ENCODE measurements at regions of chr16 and their contacts with region 1.

Region 1: GRCh38 chr16:401468-402348 is at the start of gene DECR2:
- DNase-seq: peak; percentile 67 to 96
- H3K4me3 ChIP-seq: peak within 1 kb of the TSS; percentile 99
- H3K27ac ChIP-seq: peak within 1 kb of the TSS; percentile 67
- H3K4me1 ChIP-seq: peaks cover 13% of the 10 kb centered on the region
- H3K27me3 ChIP-seq: no peaks in the 10 kb centered on the region
- CTCF ChIP-seq: no peak; the same call in 1 of the 2 replicates
- total RNA-seq, gene DECR2: 65.4 and 78.4 TPM in 2 replicates

Region 2: DNA sequence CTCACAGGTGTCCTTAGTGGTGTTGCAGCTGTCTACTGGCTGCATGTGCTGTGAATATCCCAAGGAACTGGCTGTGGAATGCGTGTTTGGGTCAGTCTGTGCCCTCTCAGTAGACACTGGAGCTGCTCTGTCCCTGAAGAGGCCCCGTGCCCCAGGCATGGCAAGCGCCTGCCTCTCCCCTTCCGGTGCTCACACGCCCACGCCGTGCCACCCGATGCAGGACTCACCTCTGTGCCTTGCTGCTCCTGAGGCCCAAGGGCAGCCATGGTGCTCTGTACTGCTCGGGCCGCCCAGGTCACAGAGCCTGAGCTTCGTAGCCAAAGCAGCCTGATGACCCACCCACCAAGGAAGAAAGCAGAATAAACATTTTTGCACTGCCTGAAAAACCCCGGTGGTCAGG is 136.0 kb before region 1 on chr16:
- CTCF ChIA-PET with region 1: no interaction called
- POLR2A ChIA-PET with region 1: no interaction called
- intact Hi-C with region 1: no loop called
- DNase-seq: no peak
- H3K4me3 ChIP-seq: no peak overlapping the region
- H3K27ac ChIP-seq: no peak overlapping the region
- H3K4me1 ChIP-seq: no peaks in the 10 kb centered on the region
- H3K27me3 ChIP-seq: no peaks in the 10 kb centered on the region; the same call in 1 of the 2 replicates
- CTCF ChIP-seq: no peak

Region 3: DNA sequence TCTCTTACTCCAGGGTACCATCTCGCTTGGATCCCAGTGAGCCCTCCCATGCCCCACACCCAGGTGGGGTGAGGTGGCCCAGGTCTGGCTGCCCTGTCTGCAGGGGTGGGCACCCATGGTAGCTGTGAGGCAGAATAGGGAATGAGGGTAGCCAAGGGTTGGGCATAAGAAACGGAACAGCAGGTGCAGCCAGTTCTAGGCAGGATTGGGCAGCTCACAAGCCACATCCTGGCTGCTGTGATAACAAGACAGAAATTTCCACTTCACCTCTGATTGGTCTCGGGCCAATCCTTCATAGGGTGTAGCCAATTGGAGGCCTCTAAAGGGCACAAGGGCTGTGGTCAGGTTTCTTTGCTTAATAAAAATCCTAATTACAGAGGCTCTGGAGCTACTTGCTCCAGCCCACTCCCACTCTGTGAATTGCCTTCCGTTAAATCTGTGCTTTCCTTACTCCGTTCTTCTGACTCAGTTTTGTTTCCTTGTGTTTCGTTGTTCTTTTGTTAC is 122.8 kb before region 1 on chr16:
- CTCF ChIA-PET with region 1: no interaction called
- POLR2A ChIA-PET with region 1: no interaction called
- intact Hi-C with region 1: no loop called
- DNase-seq: peak; percentile 39 to 58
- H3K4me3 ChIP-seq: no peak overlapping the region
- H3K27ac ChIP-seq: no peak overlapping the region
- H3K4me1 ChIP-seq: no peaks in the 10 kb centered on the region
- H3K27me3 ChIP-seq: peaks cover 12% of the 10 kb centered on the region; the same call in 1 of the 2 replicates
- CTCF ChIP-seq: no peak

Region 4: DNA sequence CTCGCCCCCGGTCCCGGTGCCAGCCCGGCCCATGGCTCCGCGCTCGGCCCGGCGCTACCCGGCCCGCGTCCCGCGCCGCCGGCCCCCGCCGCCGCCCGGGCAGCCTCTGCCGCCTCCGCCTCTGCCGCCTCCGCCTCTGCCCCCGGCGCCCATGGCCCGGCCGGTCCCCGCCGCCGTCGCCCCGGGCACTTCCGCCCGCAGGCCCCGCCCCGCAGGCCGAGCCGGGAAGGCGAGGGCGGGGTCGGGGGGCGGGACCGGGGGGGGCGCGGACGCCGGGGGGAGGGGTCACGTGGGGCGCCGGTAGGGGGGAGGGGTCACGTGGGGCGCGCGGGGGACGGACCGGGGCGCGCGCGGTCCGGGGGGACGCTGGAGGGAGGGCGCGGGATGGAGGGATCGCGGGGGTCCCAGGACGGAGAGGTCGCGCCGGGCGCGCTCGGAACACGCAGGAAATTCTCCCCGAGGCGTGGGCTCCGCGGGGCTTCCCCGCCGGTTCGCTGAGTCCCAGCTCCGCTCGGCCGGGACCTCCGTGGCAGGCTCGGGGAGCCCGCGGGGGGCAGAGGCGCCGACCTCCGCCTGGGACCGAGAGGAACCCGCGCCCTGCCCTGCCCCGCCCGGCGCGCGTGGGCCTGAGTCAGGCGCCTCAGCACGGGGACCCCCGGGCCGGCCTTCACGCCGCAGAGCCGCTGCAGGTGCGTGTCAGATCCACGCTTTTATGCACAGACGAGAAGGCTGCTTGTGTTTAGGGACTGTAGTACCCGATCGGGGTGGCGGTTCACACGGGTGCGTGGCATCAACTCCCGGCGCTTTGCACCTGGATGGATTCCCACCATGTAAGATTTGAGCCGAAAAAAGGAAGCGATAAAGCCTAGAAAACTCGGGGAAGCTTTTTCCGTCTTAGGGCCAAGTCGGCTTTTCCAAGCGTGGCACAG is 19.7 kb before region 1 on chr16 and contains the start of gene PGAP6:
- CTCF ChIA-PET with region 1: no interaction called
- POLR2A ChIA-PET with region 1: interaction called, 20 read pairs
- intact Hi-C with region 1: no loop called
- DNase-seq: peak in 1 of 2 experiments; percentile 81
- H3K4me3 ChIP-seq: peak within 1 kb of the TSS; percentile 67
- H3K27ac ChIP-seq: no peak within 1 kb of the TSS
- H3K4me1 ChIP-seq: no peaks in the 10 kb centered on the region
- H3K27me3 ChIP-seq: no peaks in the 10 kb centered on the region
- CTCF ChIP-seq: no peak
- total RNA-seq, gene PGAP6: 41.4 and 45.6 TPM in 2 replicates

Region 5: DNA sequence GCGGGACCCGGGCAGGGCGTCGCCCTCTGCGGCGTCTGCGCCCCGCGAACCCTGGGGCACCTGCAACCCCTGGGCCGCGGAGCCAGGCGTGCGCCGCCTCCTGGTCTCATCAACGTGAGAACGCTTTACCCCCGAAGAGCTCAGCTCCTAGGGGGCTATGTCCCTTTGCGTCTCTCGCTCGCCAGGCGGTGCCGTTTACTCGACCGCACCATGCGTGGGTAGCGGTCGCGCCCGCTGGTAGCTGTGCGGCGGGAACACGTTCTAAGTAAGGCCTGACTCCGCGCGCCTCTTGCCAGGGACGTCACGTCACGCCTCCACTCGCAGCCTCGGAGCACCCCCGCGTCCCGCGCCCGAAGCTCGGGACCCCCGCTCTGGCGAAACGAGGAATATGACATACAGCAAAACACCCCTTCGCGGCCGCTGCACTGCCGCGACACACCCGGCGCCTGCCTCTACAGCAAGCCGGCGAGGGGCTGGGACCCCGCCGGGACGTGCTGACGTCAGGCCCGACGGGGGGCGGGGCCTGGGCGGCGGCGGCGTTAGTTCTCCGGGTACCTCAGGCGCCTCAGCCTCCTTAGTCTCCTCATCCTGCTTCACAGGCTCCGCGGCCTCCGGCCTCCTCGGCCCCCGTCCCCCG is 23.5 kb after region 1 on chr16 and contains the start of gene RAB11FIP3:
- CTCF ChIA-PET with region 1: no interaction called
- POLR2A ChIA-PET with region 1: interaction called, 13 read pairs
- intact Hi-C with region 1: loop called (anchors 1 kb)
- DNase-seq: peak; percentile 57 to 81
- H3K4me3 ChIP-seq: peak within 1 kb of the TSS; percentile 68
- H3K27ac ChIP-seq: no peak within 1 kb of the TSS
- H3K4me1 ChIP-seq: peaks cover 22% of the 10 kb centered on the region
- H3K27me3 ChIP-seq: no peaks in the 10 kb centered on the region
- CTCF ChIP-seq: no peak; the same call in 1 of the 2 replicates
- total RNA-seq, gene RAB11FIP3: 38.4 and 42.4 TPM in 2 replicates

Region 6: DNA sequence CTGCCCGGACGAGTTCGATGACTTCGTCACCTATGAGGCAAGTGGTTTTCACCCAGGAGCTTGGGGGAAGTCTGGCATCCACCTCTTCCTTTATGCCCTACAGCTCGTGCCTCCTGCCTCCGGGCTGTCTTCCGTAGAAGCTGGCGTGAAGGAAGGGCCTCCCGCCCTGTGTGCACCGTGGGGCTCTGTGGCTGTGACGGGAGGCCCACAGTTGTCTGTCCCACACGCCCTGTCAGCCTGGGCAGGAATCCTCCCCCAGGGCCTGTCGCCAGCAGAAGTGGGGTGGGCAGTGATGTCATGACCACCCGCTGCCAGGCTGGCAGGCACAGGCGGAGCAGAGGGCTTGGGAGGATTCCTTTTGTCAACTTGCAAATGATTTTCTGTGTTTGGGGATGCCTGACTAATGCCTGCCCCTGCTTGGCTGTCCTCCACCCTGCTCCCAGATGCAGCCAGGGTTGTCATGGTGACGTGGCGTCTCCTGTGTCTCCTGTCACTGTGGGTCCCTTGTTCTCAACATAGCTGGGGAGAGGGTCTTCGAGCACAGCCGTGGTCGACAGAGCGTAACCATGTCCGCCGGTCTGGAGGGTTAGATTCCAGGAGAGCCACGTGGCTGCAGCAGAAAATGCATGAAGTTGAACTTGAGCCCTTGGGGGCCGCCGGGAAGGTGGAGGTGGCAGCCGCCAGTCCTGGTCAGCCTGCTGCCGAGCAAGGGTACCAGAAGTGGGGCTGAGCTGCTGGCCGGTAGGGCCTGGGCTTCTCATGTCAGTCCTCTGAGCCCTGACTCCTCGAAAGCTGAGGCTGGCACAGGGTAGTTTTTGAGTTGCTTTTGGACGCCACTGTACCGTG is 69.9 kb after region 1 on chr16:
- CTCF ChIA-PET with region 1: no interaction called
- POLR2A ChIA-PET with region 1: no interaction called
- intact Hi-C with region 1: no loop called
- DNase-seq: no peak
- H3K4me3 ChIP-seq: no peak overlapping the region
- H3K27ac ChIP-seq: no peak overlapping the region
- H3K4me1 ChIP-seq: no peaks in the 10 kb centered on the region
- H3K27me3 ChIP-seq: no peaks in the 10 kb centered on the region
- CTCF ChIP-seq: no peak

Region 7: GRCh38 chr16:535446-536405 is 134.0 kb after region 1 on chr16:
- CTCF ChIA-PET with region 1: no interaction called
- POLR2A ChIA-PET with region 1: no interaction called
- intact Hi-C with region 1: loop called (anchors 2 kb)
- DNase-seq: peak; percentile 92 to 99
- H3K4me3 ChIP-seq: no peak overlapping the region
- H3K27ac ChIP-seq: peak overlapping the region; percentile 66
- H3K4me1 ChIP-seq: peaks cover 33% of the 10 kb centered on the region
- H3K27me3 ChIP-seq: no peaks in the 10 kb centered on the region
- CTCF ChIP-seq: no peak; the same call in 1 of the 2 replicates

Region 8: DNA sequence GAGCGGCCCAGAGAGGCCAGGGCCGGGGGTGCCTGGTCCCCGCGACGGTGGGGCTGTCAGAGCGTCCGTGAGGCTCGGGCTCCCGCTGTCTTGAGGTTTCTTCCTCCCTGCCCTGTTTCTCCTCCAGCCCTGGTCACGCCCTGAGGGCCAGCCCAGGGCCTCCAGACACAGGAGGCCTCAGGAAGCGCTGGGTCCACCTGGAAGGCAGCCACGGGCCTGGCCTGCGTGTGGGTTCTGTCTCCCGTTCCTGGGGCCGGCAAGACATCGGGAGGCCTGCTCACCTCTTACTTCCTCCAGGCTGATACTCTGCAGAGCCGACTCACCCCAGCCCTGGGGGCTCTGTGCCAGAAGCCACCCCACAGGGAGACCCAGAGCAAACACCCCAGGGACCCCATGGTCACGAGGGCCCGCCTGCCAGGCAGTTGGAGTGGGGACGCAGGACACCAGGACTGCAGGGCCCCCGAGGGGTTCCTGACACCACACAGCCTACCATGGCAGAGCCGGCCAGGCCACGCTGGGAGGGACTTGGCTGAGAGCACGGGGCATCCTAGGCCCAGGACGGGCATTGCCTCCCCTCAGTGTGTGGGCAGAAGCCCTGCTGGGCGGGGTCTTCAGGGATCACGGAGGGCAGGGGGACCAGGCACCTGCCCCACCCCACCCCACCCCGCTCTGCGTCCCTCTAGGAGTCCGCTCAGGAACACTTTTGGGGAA is 732.3 kb after region 1 on chr16:
- CTCF ChIA-PET with region 1: no interaction called
- POLR2A ChIA-PET with region 1: no interaction called
- intact Hi-C with region 1: no loop called
- DNase-seq: no peak
- H3K4me3 ChIP-seq: no peak overlapping the region
- H3K27ac ChIP-seq: no peak overlapping the region
- H3K4me1 ChIP-seq: no peaks in the 10 kb centered on the region
- H3K27me3 ChIP-seq: peaks cover 61% of the 10 kb centered on the region
- CTCF ChIP-seq: no peak

Measured in PC-9 (cell line).